A673 (cell line): ENCODE measurements at regions of chr5 and their contacts with region 1.

Region 1: DNA sequence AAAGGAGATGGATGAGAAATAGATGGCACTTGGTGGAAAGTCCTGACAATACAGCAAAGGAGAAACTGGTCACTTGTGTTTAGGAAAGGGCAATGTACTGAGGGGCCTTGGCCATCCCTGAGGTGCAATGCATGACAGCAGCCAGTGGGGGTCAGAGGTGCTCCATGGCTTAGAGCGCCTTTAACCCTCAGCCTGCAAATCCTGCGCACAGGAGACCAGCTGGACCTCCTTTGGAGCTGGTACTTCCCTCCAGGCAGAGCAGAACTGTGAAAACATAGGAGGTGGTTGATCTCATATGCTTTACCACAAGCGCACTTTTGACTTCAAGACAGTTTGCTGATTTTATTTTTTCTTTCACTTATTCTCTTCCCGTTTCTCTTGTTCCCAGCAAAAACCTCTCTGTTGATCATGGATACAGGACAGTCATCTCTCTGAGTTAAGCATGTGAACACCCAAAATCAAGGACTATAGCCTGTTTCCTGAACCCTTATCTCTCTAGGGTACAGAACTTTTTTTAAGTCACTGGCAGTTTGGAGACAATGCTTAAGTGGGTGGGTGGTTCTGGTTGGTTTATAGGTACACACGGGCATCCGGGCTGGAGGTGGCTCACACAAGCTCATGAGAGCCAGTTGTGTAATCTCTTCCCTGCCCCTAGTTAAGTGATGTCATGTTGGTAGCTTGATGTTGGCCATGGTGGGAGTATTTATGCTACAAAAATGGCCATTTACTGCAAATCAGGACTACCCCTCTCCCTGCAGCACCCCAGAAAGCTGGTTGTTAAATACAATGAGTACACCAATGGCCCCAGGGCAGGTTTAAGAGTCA is 37.6 kb upstream of the ANKRD55 start:
- DNase-seq: peak; percentile 82
- H3K4me3 ChIP-seq: no peak overlapping the region
- H3K27ac ChIP-seq: no peak overlapping the region
- H3K4me1 ChIP-seq: no peaks in the 10 kb centered on the region
- H3K27me3 ChIP-seq: no peaks in the 10 kb centered on the region
- CTCF ChIP-seq: peak; percentile 93

Region 2: GRCh38 chr5:56838409-56839039 is 567.7 kb after region 1 on chr5:
- CTCF ChIA-PET with region 1: interaction called, 12 read pairs
- POLR2A ChIA-PET with region 1: no interaction called
- intact Hi-C with region 1: loop called (anchors 1 kb)
- DNase-seq: peak; percentile 76
- H3K4me3 ChIP-seq: no peak overlapping the region
- H3K27ac ChIP-seq: no peak overlapping the region
- H3K4me1 ChIP-seq: no peaks in the 10 kb centered on the region
- H3K27me3 ChIP-seq: no peaks in the 10 kb centered on the region
- CTCF ChIP-seq: peak; percentile 63

Region 3: DNA sequence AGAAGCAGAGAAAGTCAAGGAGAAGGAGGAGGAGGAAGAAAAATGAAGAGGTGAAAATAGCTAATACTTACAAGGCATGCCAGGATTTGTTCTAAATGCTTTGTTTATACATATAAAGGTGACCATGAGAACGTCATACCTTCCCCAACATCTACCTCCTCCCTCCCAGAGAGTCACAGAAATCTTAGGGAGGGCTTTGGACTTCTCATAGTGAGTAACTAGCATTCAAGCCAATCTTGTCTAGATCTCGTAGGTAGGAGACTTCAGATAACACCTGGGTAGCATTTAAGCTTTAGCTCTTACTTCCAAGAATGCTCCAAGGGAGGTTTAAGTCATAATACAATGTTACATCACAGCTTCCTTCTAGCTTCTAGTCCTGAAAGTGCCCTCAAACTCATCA is 866.6 kb after region 1 on chr5:
- CTCF ChIA-PET with region 1: no interaction called
- POLR2A ChIA-PET with region 1: no interaction called
- intact Hi-C with region 1: loop called (anchors 10 kb)
- DNase-seq: no peak
- H3K4me3 ChIP-seq: no peak overlapping the region
- H3K27ac ChIP-seq: no peak overlapping the region
- H3K4me1 ChIP-seq: no peaks in the 10 kb centered on the region
- H3K27me3 ChIP-seq: no peaks in the 10 kb centered on the region
- CTCF ChIP-seq: no peak

Region 4: GRCh38 chr5:57277085-57277484 is 1006.3 kb after region 1 on chr5:
- CTCF ChIA-PET with region 1: no interaction called
- POLR2A ChIA-PET with region 1: no interaction called
- intact Hi-C with region 1: loop called (anchors 5 kb)
- DNase-seq: peak; percentile 40
- H3K4me3 ChIP-seq: no peak overlapping the region
- H3K27ac ChIP-seq: no peak overlapping the region
- H3K4me1 ChIP-seq: no peaks in the 10 kb centered on the region
- H3K27me3 ChIP-seq: no peaks in the 10 kb centered on the region
- CTCF ChIP-seq: peak; percentile 51